Activated CD8-positive, alpha-beta T cell treated with anti-CD3 and anti-CD28 coated beads, Interleukin-2, amount 10 ng/mL, durations not matched to agents 7 days and 5 days (primary cell): ENCODE measurements at regions of chr1 and their contacts with region 1.

Region 1: DNA sequence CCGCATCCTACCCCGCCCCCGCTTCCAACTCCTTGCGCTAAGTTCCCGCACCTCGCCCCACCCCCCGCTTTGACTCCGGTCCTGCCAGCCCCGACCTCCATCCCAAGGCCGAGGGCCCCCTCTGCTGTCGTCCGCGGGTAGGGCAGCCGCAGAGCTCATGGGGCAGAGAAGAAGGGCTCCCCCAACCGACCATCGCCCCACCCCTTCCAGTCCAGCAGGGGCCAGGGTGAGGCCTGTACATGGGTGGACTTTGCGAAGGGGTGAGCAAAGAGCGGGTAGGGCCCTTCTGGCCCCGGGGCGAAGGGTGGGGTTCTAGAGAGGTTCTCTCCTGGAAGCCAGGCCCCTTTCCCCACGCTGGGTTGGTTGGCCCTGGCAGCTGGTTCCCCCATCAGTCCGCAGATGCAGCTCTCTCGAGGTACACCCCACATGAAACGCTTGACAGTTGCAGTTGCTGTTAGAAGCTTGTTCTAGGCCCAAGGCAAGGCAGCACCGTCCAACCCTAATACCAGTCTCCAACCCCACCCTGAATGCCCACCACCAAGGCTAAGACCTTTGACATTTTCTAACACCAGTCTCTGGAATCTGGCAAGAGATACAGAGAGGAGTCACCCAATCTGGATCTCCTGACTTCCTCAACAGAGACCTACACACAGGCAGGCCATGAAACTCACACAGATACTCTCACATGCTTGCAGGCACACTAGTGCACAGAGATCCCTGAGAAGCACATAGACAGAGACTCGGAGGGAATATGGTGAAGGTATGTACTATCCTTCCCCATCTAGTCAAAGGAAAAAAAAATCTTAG is 25.3 kb upstream of the ADGRB2 start:
- DNase-seq: peak; percentile 97
- ATAC-seq: peak; percentile 82
- H3K4me3 Mint-ChIP-seq: peak overlapping the region; percentile 77
- H3K27ac Mint-ChIP-seq: no peak overlapping the region
- H3K4me1 Mint-ChIP-seq: peaks cover 12% of the 10 kb centered on the region
- H3K27me3 Mint-ChIP-seq: no peaks in the 10 kb centered on the region

Region 2: DNA sequence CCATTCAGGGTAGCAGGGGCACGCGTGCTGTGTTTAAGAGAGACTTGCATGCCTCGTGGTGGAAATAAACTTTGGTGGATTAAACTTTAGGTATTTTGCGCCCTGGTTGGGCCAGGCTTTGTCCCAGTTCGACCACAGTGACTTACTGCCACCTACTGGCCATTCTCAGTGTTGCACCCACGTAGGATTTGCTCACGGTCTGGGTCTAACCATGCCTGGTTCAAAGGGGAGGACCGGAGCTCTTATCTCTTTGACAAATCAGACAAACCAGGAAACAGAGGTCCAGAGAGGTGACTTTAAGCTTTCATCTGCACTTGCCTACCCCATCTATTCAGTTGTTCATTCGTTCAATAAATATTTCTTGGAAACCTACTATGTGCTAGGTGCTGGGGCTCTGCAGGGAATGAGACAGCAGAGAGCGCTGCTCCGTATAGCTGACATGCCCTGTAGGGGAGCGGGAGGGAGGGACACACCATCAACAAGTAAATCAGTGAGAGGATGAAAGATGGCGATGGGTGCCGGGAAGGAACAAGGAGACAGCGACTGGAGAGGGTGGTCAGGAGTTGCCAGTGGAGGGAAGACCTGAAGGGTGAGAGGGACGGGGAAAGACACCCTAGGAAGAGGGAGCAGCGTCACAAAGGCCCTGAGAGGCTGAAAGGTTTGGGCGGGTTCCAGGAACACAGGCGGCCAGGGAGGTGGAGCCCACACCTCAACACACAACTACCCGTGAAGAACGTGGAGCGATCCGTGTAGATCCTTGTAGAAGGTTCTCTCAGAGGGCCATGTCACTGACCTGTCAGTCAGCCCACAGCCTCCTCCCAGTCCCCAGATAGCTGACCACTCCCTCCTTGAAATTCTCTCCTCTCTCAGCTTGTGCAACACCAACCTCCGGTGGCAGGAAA is 240.3 kb before region 1 on chr1:
- CTCF ChIA-PET with region 1: interaction called, 28 read pairs
- POLR2A ChIA-PET with region 1: no interaction called
- DNase-seq: peak; percentile 93
- ATAC-seq: peak; percentile 95
- H3K4me3 Mint-ChIP-seq: peak overlapping the region; percentile 63
- H3K27ac Mint-ChIP-seq: no peak overlapping the region
- H3K4me1 Mint-ChIP-seq: peaks cover 11% of the 10 kb centered on the region
- H3K27me3 Mint-ChIP-seq: peaks cover 7% of the 10 kb centered on the region

Region 3: GRCh38 chr1:31644560-31645273 is 144.7 kb before region 1 on chr1 and contains the start of gene PEF1:
- CTCF ChIA-PET with region 1: interaction called, 20 read pairs
- POLR2A ChIA-PET with region 1: interaction called, 9 read pairs
- DNase-seq: peak; percentile 99
- ATAC-seq: peak; percentile 84
- H3K4me3 Mint-ChIP-seq: peak within 1 kb of the TSS; percentile 91
- H3K27ac Mint-ChIP-seq: peak within 1 kb of the TSS; percentile 100
- H3K4me1 Mint-ChIP-seq: peaks cover 26% of the 10 kb centered on the region
- H3K27me3 Mint-ChIP-seq: no peaks in the 10 kb centered on the region
- total RNA-seq, gene PEF1: 55.2 to 58.0 TPM

Region 4: DNA sequence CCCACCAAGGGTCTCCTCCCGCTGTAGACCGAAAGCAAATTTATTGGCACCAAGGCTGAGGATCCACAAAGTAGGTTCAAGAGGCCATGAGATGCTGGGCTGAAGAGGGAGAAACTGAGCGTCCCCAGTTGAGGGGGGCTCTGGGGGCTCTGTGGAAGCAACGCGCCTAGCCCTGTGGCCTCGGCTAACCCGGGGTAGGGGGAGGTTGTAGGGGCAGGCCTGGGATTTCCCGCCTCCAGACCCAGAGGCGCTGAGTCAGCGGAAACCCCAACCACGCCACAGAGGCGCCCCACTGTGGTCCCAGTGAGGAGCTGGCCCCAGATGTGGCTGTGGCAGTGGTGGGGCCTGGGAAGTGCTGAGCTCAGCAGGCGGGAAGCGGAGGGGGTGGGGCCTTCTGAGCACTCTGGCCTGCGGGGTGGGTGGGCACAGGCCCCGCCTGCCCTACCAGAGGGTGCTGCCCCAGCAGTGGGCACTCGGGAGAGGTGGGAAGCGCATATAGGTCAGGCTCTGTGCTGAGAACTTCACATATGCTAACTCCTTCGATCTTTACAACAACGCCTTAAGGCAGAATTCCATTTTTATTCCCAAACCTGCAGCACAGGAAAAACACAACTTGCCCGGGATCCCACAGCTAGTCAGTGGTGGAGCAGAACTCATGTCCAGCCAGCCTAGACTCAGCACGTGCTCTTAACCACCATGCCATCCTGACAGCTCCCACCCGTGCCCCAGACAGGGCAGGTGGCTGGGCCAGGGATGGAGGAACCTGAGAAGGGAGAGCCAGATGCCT is 84.2 kb before region 1 on chr1:
- CTCF ChIA-PET with region 1: interaction called, 10 read pairs
- POLR2A ChIA-PET with region 1: no interaction called
- DNase-seq: peak; percentile 79
- ATAC-seq: peak; percentile 79
- H3K4me3 Mint-ChIP-seq: peak overlapping the region; percentile 7
- H3K27ac Mint-ChIP-seq: no peak overlapping the region
- H3K4me1 Mint-ChIP-seq: peaks cover 41% of the 10 kb centered on the region
- H3K27me3 Mint-ChIP-seq: peaks cover 52% of the 10 kb centered on the region

Region 5: DNA sequence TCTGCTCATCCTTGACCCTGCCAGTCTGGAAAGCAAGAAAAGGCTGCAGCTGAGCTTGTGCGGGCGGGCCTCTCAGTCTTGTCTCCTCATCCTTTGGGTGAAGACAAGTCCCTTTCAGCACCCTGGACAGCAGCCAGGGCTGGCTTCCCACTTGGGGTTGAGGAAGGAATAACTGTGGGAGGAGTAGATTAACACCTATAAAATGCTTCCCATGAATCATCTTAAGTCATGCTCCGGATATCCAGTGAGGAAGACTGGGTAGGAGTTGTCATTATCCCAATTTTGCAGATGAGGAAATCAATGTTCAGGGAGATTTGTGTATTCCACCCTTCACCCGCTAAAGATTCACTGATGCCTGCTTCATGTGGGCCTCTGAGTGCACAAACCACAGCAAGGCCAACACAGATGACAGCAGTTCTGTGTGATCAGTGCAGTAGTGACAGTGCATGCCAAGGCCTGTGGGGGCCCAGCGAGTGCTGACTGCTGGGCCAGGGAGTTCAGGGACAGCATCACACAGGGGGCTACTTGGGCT is 65.6 kb before region 1 on chr1:
- CTCF ChIA-PET with region 1: no interaction called
- POLR2A ChIA-PET with region 1: no interaction called
- DNase-seq: peak; percentile 77
- ATAC-seq: no peak
- H3K4me3 Mint-ChIP-seq: no peak overlapping the region
- H3K27ac Mint-ChIP-seq: no peak overlapping the region
- H3K4me1 Mint-ChIP-seq: no peaks in the 10 kb centered on the region
- H3K27me3 Mint-ChIP-seq: peaks cover 5% of the 10 kb centered on the region

Region 6: DNA sequence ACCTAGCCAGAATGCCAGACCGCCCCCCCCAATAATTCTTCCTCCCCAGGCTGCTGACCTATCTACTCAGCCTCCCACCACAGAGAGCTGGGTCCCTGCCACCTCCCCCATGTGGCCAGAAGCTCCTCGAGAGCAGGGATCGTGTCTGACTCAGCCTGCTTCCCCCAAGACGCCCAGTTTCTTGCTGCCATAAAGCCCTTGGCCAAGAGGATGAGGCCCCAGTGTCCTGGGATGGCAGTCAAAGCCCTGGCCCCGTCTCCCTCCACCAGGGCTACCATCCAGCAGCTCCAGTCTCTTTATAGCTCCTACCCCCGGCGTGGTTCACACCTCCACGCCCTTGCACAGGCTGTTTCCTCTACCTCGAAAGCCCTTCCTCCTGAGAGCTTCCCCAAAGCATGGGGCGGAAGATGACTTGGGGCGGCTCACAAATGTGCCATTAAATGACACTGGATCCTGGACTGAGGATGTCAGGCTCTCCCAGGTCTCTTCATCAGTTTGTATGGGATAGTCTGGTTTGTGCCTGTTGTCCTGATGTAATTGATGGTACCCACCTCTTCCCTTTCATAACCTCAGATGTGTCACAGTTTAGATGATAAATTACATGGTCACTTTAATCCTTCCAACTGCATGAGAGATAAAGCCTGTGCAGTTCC is 38.5 kb before region 1 on chr1:
- CTCF ChIA-PET with region 1: interaction called, 24 read pairs
- POLR2A ChIA-PET with region 1: interaction called, 5 read pairs
- DNase-seq: peak; percentile 65
- ATAC-seq: peak; percentile 62
- H3K4me3 Mint-ChIP-seq: peak overlapping the region; percentile 3
- H3K27ac Mint-ChIP-seq: peak overlapping the region; percentile 80
- H3K4me1 Mint-ChIP-seq: peaks cover 57% of the 10 kb centered on the region
- H3K27me3 Mint-ChIP-seq: no peaks in the 10 kb centered on the region

Region 7: DNA sequence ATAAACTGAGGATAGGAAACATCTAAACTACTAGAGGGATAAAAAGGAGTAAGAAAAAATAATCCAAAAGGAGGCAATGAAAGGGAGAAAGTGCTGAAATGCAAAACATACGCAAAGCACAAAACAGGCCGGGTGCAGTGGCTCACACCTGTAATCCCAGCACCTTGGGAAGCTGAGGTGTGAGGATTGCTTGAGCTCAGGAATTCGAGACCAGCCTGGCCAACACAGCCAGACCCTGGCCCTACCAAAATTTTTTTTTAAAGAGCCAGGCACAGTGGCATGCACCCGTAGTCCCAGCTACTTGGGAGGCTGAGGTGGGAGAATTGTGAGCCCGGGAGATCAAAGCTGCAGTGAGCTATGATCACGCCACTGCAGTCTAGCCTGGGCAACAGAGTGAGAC is 15.9 kb after region 1 on chr1:
- CTCF ChIA-PET with region 1: interaction called, 21 read pairs
- POLR2A ChIA-PET with region 1: no interaction called
- DNase-seq: no peak
- ATAC-seq: no peak
- H3K4me3 Mint-ChIP-seq: no peak overlapping the region
- H3K27ac Mint-ChIP-seq: no peak overlapping the region
- H3K4me1 Mint-ChIP-seq: peaks cover 9% of the 10 kb centered on the region
- H3K27me3 Mint-ChIP-seq: peaks cover 11% of the 10 kb centered on the region

Region 8: GRCh38 chr1:31831397-31832378 is 42.2 kb after region 1 on chr1:
- CTCF ChIA-PET with region 1: no interaction called
- POLR2A ChIA-PET with region 1: no interaction called
- DNase-seq: no peak
- ATAC-seq: no peak
- H3K4me3 Mint-ChIP-seq: no peak overlapping the region
- H3K27ac Mint-ChIP-seq: no peak overlapping the region
- H3K4me1 Mint-ChIP-seq: peaks cover 32% of the 10 kb centered on the region
- H3K27me3 Mint-ChIP-seq: no peaks in the 10 kb centered on the region